Left ventricle myocardium superior (tissue), 1 donor: ENCODE measurements at regions of chr6 and their contacts with region 1.

Region 1: GRCh38 chr6:149515494-149515893 is 30.3 kb downstream of the PPIL4 start:
- DNase-seq: no peak
- ATAC-seq: no peak

Region 2: GRCh38 chr6:149082286-149082707 is 433.2 kb before region 1 on chr6:
- intact Hi-C with region 1: loop called (anchors 5 kb)
- DNase-seq: peak; percentile 86
- ATAC-seq: peak; percentile 60